Spleen (tissue), 13 donors: ENCODE measurements at regions of chr21 and their contacts with region 1.

Region 1: DNA sequence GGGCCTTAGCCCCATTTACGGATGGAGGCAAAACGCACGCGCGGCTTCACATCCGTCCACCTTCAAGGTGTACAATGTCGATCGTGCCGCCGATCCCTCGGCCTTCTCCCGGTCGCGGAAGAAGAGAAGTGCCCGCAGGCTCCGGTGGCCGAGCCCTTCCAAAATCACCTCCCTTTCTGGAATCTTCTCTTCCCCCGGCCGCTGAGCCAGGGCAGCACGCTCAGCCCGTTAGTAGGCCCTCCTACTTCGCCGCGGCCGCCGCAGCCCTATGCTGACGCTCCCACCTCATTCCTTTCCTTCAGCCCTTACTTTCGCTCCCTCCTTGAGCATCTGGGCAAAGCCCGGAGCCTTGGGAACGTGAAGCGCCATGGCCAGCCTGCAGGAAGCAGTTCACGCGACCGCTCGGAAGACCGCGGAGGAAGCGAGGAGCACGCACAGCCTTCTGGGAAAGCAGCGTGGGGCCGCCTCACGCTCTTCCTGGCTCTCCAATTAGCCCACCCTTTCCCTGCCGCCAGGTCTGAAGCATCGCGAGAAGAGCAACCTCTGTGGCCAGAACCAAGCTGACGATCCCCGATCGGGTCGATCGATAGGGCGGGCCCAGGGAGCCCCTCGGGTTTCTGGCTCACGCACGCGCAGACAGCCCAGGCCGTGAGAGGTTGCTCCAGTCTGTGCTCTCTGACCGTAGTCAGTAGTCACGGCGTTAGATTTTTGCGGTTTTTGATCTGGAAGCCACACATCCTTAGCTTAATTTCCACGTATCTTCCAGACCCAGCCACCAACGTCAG is at the start of gene CCT8:
- DNase-seq: peak; percentile 100
- H3K4me3 ChIP-seq: peak within 1 kb of the TSS; percentile 75 to 95 (median 90)
- H3K27ac ChIP-seq: peak within 1 kb of the TSS; percentile 86 to 94 (median 92)
- H3K4me1 ChIP-seq: peaks cover 19 to 74% (median 45%) of the 10 kb centered on the region in 6 donors
- H3K27me3 ChIP-seq: no peaks in the 10 kb centered on the region
- CTCF ChIP-seq: peak in 2 of 11 experiments; percentile 25 to 50
- POLR2A ChIP-seq: peak; percentile 6 to 87 (median 29)
- total RNA-seq, gene CCT8: 92.3 to 137 (median 115) TPM

Region 2: DNA sequence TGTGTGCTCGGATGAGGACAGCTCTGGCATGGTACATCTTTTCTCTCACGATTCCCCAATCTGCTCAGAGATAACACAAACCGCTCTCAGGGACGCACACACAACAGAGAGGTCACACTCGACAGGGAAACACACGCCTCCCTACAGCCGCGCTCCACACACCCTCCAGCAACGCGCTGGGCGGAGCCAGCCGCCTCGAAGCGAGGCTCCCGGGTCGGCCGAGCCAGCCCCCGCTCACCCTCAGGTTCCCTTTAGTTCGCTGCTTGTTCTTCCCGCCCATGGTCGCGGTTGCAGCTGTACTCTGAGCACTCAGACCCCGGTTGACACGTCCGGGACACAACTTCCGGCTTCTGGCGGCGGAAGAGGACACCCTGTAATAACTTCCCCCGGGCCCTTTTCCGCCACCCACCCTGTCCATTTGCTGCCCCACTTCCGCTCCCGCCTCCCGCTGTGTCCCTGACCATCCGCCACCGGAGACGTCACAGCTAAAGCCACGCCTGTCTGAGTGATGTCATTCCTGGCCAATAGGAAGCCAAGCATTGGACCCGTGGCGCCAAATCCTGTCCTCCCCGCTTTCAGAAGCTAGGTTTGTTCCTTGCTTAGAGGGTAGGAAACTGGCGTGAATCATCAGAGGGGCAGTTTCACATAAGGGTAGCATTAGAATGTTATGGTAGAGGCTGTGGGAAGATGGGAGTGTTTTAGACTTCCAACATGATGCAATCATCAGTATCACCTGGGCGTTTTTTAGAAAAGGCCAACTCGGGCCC is 80.7 kb before region 1 on chr21 and contains the start of gene LTN1:
- intact Hi-C with region 1: loop called (anchors 10 kb)
- DNase-seq: peak; percentile 98
- H3K4me3 ChIP-seq: peak within 1 kb of the TSS; percentile 77 to 96 (median 88)
- H3K27ac ChIP-seq: peak within 1 kb of the TSS; percentile 90 to 97 (median 94)
- H3K4me1 ChIP-seq: peaks cover 19 to 49% (median 27%) of the 10 kb centered on the region in 6 donors
- H3K27me3 ChIP-seq: no peaks in the 10 kb centered on the region
- CTCF ChIP-seq: peak in 3 of 11 experiments; percentile 19 to 40 (median 32)
- POLR2A ChIP-seq: peak; percentile 31 to 90 (median 50)
- total RNA-seq, gene LTN1: 26.1 to 37.3 (median 33.8) TPM

Region 3: GRCh38 chr21:29245104-29245643 is 171.8 kb after region 1 on chr21:
- intact Hi-C with region 1: no loop called
- DNase-seq: no peak
- H3K4me3 ChIP-seq: no peak overlapping the region
- H3K27ac ChIP-seq: peak overlapping the region in 3 of 8 donors; percentile 22 to 26 (median 23)
- H3K4me1 ChIP-seq: peaks cover 0 to 20% (median 4%) of the 10 kb centered on the region in 6 donors
- H3K27me3 ChIP-seq: no peaks in the 10 kb centered on the region
- CTCF ChIP-seq: no peak
- POLR2A ChIP-seq: no peak

Region 4: GRCh38 chr21:29372063-29372802 is 298.8 kb after region 1 on chr21:
- intact Hi-C with region 1: no loop called
- DNase-seq: peak; percentile 74
- H3K4me3 ChIP-seq: no peak overlapping the region
- H3K27ac ChIP-seq: no peak overlapping the region
- H3K4me1 ChIP-seq: peaks cover 0 to 18% (median 0%) of the 10 kb centered on the region in 6 donors
- H3K27me3 ChIP-seq: no peaks in the 10 kb centered on the region
- CTCF ChIP-seq: peak; percentile 52 to 88 (median 74)
- POLR2A ChIP-seq: no peak